ENCODE measurements at regions of chr10 and their contacts with region 1.

Region 1: GRCh38 chr10:29443745-29444523 is 155.1 kb downstream of the LYZL1 start:
- DNase-seq: peak; percentile 48
- H3K4me3 ChIP-seq: no peak overlapping the region
- H3K27ac ChIP-seq: no peak overlapping the region
- H3K4me1 ChIP-seq: peaks cover 7% of the 10 kb centered on the region
- H3K27me3 ChIP-seq: no peaks in the 10 kb centered on the region
- CTCF ChIP-seq: no peak

Region 2: GRCh38 chr10:29214551-29214950 is 229.4 kb before region 1 on chr10:
- CTCF ChIA-PET with region 1: no interaction called
- dilution Hi-C with region 1: no loop called
- in situ Hi-C with region 1: no loop called
- intact Hi-C with region 1: no loop called
- DNase-seq: no peak
- H3K4me3 ChIP-seq: no peak overlapping the region
- H3K27ac ChIP-seq: no peak overlapping the region
- H3K4me1 ChIP-seq: no peaks in the 10 kb centered on the region
- H3K27me3 ChIP-seq: peaks cover 2% of the 10 kb centered on the region
- CTCF ChIP-seq: no peak

Region 3: DNA sequence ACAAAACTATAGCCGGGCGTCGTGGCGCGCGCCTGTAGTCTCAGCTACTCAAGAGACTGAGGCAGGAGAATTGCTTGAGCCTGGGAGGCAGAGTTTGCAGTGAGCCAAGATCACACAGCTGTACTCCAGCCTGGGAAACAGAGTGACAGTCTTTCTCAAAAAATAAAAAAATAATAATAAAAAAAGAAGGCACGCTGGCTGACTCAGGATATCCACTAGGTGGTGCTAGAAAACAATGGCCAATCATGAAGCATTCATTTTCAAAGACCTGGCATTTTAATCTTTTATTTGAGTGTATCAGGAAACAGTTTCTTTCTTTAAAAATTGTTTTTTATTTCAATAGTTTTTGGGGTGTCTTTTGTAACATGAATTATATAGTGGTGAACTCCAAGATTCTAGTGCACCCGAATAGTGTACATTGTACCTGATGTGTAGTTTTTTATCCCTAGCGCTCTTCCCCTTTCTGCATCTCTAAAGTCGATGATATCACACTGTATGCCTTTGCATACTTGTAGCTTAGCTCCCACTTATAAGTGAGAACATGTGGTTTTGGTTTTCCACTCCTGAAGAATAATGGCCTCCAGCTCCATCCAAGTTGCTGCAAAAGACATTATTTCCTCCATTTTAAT is 66.5 kb before region 1 on chr10:
- CTCF ChIA-PET with region 1: no interaction called
- dilution Hi-C with region 1: no loop called
- in situ Hi-C with region 1: no loop called
- intact Hi-C with region 1: loop called (anchors 1 kb)
- DNase-seq: peak; percentile 8
- H3K4me3 ChIP-seq: no peak overlapping the region
- H3K27ac ChIP-seq: no peak overlapping the region
- H3K4me1 ChIP-seq: no peaks in the 10 kb centered on the region
- H3K27me3 ChIP-seq: no peaks in the 10 kb centered on the region
- CTCF ChIP-seq: peak; percentile 75 to 76

Region 4: DNA sequence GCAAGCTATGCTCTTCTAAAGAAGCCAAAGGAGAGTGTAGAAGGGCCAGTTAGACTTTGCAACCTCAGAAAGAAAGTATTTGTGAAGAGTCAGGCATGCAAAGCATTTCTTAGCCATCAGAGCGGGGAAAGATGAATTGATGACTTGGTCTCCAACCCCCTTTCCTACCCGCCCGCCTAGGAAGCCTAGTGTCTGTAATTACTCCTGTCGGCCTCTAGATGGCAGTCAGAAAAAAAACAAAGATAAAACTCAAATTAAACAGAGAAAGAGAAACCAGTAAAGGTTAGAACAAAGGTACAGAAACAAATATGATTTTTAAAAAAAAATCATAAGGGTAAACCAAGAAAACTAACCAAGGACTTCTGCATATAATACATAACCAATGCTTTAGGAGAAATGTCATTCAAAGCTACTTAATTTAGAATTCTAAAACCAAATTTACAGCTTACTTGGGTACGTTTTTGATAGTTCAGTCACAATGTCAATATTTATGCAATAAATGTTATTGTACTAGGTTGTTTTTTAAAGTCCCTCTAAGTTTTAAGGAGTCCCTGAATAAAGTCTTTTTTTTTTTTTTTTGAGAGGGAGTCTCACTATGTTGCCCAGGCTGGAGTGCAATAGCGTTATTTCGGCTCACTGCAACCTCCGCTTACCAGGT is 57.5 kb before region 1 on chr10:
- CTCF ChIA-PET with region 1: interaction called, 4 read pairs
- dilution Hi-C with region 1: no loop called
- in situ Hi-C with region 1: no loop called
- intact Hi-C with region 1: loop called (anchors 2 kb)
- DNase-seq: peak; percentile 11
- H3K4me3 ChIP-seq: no peak overlapping the region
- H3K27ac ChIP-seq: no peak overlapping the region
- H3K4me1 ChIP-seq: no peaks in the 10 kb centered on the region
- H3K27me3 ChIP-seq: no peaks in the 10 kb centered on the region
- CTCF ChIP-seq: peak; percentile 52 to 61

Region 5: GRCh38 chr10:29409241-29410057 is 34.5 kb before region 1 on chr10:
- CTCF ChIA-PET with region 1: no interaction called
- dilution Hi-C with region 1: no loop called
- in situ Hi-C with region 1: no loop called
- intact Hi-C with region 1: loop called (anchors 5 kb)
- DNase-seq: peak; percentile 75
- H3K4me3 ChIP-seq: peak overlapping the region; percentile 51 to 93 (median 69)
- H3K27ac ChIP-seq: peak overlapping the region; percentile 89
- H3K4me1 ChIP-seq: peaks cover 8% of the 10 kb centered on the region
- H3K27me3 ChIP-seq: no peaks in the 10 kb centered on the region
- CTCF ChIP-seq: peak in 1 of 2 donors; percentile 0

Region 6: GRCh38 chr10:29420744-29421143 is 23.2 kb before region 1 on chr10:
- CTCF ChIA-PET with region 1: no interaction called
- dilution Hi-C with region 1: no loop called
- in situ Hi-C with region 1: no loop called
- intact Hi-C with region 1: no loop called
- DNase-seq: no peak
- H3K4me3 ChIP-seq: no peak overlapping the region
- H3K27ac ChIP-seq: no peak overlapping the region
- H3K4me1 ChIP-seq: no peaks in the 10 kb centered on the region
- H3K27me3 ChIP-seq: no peaks in the 10 kb centered on the region
- CTCF ChIP-seq: no peak

Region 7: GRCh38 chr10:29501692-29502091 is 57.8 kb after region 1 on chr10:
- CTCF ChIA-PET with region 1: no interaction called
- dilution Hi-C with region 1: no loop called
- in situ Hi-C with region 1: no loop called
- intact Hi-C with region 1: loop called (anchors 1 kb)
- DNase-seq: peak; percentile 87
- H3K4me3 ChIP-seq: no peak overlapping the region
- H3K27ac ChIP-seq: peak overlapping the region; percentile 92
- H3K4me1 ChIP-seq: peaks cover 19% of the 10 kb centered on the region
- H3K27me3 ChIP-seq: no peaks in the 10 kb centered on the region
- CTCF ChIP-seq: no peak

Measured in mammary epithelial cell (primary cell).